Activated CD4-positive, alpha-beta memory T cell treated with anti-CD3 and anti-CD28 coated beads, Interleukin-2, amount 10 ng/mL, durations not matched to agents 7 days and 5 days (primary cell): ENCODE measurements at regions of chr22 and their contacts with region 1.

Region 1: DNA sequence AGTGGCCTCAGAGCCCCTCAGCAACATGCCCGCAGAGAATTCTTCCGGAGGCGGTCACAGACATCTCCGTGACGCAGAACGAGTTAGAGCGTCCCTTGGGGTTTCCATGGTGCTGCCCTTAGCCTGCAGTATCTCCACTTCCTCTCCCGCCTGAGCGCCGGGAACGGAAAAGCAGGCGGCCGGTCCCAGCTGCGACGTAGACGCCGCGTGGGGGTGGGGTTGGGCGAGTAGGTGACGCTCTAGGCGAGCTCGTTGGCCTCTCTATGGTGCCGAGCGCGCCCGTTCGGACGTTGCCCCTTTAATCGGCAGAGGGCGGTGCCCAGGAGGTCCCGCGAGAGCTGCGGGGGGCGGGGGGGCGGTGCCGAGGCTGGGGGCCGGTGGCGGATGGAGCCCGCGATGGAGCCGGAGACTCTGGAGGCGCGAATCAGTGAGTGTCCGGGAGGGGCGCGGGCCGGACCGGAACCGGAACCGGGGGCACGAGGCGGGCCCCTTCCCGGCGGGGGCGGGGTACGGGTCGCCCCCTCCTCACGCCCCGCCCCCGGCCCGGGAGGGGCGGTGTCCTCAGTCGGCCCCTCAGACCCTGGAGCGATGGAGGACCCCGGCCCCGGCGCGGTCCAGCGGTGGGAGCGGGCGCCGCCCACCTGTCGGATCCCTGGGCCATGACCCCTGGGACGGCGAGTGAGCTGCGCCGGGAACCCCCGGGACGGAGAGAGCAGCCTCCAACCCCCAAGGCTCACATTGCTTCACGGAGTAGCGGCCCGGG is at the start of gene GGA1:
- DNase-seq: peak; percentile 98
- H3K4me3 Mint-ChIP-seq: peak within 1 kb of the TSS; percentile 89
- H3K27ac Mint-ChIP-seq: peak within 1 kb of the TSS; percentile 88
- H3K4me1 Mint-ChIP-seq: peaks cover 64% of the 10 kb centered on the region
- H3K27me3 Mint-ChIP-seq: no peaks in the 10 kb centered on the region
- total RNA-seq, gene GGA1: 59.5 to 64.4 TPM

Region 2: GRCh38 chr22:37063431-37064420 is 544.9 kb before region 1 on chr22:
- CTCF ChIA-PET with region 1: no interaction called
- POLR2A ChIA-PET with region 1: no interaction called
- DNase-seq: no peak
- H3K4me3 Mint-ChIP-seq: no peak overlapping the region
- H3K27ac Mint-ChIP-seq: peak overlapping the region; percentile 19
- H3K4me1 Mint-ChIP-seq: peaks cover 33% of the 10 kb centered on the region
- H3K27me3 Mint-ChIP-seq: peaks cover 7% of the 10 kb centered on the region

Region 3: GRCh38 chr22:37566903-37567820 is 41.5 kb before region 1 on chr22:
- CTCF ChIA-PET with region 1: interaction called, 29 read pairs
- POLR2A ChIA-PET with region 1: interaction called, 4 read pairs
- DNase-seq: peak; percentile 97
- H3K4me3 Mint-ChIP-seq: peak overlapping the region; percentile 54
- H3K27ac Mint-ChIP-seq: peak overlapping the region; percentile 79
- H3K4me1 Mint-ChIP-seq: peaks cover 27% of the 10 kb centered on the region
- H3K27me3 Mint-ChIP-seq: peaks cover 43% of the 10 kb centered on the region

Region 4: DNA sequence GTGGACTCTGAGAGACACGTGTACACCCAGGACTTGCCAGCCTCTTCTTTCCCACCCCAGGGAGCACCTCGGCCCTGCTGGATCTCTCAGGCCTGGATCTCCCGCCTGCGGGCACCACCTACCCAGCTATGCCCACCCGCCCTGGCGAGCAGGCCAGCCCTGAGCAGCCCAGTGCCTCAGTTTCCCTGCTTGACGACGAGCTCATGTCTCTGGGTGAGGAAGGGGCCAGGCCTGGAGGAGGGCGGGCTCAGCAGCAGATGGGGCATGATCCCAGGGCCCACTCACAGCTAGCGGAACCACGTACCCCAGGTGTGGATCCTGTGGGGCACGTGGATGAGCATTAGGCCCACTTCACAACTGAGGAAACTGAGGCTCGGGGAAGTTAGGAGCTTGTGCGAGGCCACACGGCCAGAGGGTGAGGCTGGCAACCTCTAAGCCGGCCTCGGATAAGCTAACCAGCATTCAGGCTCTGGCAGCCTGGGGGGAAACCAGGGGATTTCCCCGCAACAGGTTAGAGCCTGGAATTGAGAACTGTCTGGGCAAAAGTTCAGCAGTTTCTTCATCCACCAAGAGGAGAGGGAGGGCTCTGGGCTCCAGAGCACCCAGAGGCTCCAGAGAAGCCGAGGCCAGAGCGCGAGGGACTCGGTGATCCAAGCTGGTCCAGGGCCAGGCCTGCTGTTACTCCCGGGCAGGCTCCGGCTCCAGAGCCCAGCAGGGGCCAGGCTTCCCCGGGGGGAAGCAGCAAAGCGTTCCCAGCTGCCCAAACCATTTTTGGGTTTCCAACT is 17.3 kb after region 1 on chr22:
- CTCF ChIA-PET with region 1: interaction called, 30 read pairs
- POLR2A ChIA-PET with region 1: interaction called, 15 read pairs
- DNase-seq: no peak
- H3K4me3 Mint-ChIP-seq: no peak overlapping the region
- H3K27ac Mint-ChIP-seq: no peak overlapping the region
- H3K4me1 Mint-ChIP-seq: peaks cover 47% of the 10 kb centered on the region
- H3K27me3 Mint-ChIP-seq: no peaks in the 10 kb centered on the region

Region 5: DNA sequence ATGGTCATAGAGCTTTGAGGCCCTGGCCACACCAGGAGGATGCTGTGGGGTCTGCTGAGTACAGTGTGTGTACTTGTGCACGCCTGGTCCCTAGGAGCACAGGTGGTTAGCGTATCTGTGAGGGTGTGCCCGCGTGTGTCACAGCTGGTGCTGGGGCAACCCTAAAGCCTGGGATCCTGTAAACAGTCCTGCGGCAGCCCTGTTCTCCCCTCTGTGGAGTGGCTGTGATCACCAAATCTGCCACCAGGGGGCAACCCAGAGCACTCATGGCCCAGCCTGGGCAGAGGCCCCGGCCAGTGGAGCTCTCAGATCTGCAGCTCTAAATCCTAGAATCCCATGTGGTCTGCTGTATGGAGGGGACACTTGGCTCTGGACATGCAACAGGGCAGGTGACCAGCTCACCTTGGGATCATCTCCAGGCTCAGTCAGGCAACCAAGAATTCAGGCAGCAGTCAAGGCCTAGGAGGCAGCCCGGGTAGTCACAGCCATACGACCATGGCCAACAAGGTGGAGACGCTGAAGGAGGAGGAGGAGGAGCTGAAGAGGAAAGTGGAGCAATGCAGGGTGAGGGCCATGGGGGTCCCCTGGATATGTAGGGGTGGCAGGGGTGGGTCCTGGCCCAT is 34.7 kb after region 1 on chr22:
- CTCF ChIA-PET with region 1: interaction called, 15 read pairs
- POLR2A ChIA-PET with region 1: interaction called, 20 read pairs
- DNase-seq: peak; percentile 88
- H3K4me3 Mint-ChIP-seq: peak overlapping the region; percentile 50
- H3K27ac Mint-ChIP-seq: peak overlapping the region; percentile 66
- H3K4me1 Mint-ChIP-seq: peaks cover 40% of the 10 kb centered on the region
- H3K27me3 Mint-ChIP-seq: no peaks in the 10 kb centered on the region

Region 6: DNA sequence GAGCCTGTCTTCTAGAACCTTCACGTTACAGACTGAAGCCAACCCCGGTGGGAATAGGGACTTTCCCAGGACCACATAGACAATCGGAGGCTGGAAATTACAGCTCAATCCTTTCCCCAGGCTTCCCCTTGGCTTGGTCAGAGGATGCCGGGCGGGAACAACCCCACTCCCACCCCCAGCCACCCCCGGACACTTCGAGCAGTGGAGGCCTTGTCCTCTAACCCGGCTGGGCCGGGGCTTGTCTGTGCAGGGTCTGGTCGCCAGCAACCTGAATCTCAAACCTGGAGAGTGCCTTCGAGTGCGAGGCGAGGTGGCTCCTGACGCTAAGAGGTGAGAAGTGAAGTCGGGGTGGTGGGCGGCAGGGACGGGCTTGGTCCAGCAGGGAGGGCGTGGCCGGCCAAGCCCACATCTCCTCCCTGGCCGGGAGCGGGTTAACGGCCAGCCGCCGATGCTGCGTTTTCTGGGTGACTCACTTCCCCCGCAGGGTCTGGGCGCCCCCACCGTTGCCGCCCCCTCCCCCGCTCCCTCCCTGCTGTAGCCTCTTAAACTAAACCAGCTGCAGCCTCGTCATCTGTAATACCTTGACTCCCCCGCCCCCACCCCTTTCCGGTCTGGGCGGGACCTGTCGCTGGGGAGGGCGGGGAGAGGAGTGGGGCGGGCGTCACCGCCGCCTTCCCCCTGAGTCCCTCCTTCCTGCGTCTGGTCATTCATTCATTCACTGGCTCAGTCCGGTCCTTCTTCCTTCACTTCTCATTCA is 68.3 kb after region 1 on chr22:
- CTCF ChIA-PET with region 1: interaction called, 49 read pairs
- POLR2A ChIA-PET with region 1: interaction called, 11 read pairs
- DNase-seq: peak; percentile 96
- H3K4me3 Mint-ChIP-seq: peak overlapping the region; percentile 88
- H3K27ac Mint-ChIP-seq: peak overlapping the region; percentile 99
- H3K4me1 Mint-ChIP-seq: peaks cover 62% of the 10 kb centered on the region
- H3K27me3 Mint-ChIP-seq: no peaks in the 10 kb centered on the region